ENCODE measurements at regions of chr18 and their contacts with region 1.

Region 1: GRCh38 chr18:13137670-13138419 is 80.7 kb upstream of the LDLRAD4 start:
- DNase-seq: peak; percentile 99
- ATAC-seq: peak; percentile 91
- H3K4me3 ChIP-seq: peak overlapping the region; percentile 81 to 98 (median 88)
- H3K27ac ChIP-seq: peak overlapping the region; percentile 99
- H3K4me1 ChIP-seq: peaks cover 37% of the 10 kb centered on the region
- H3K27me3 ChIP-seq: no peaks in the 10 kb centered on the region; a peak in 1 of 5 replicates
- CTCF ChIP-seq: peak; percentile 4; the same call in 1 of the 2 replicates
- EP300 ChIP-seq: peak; percentile 30 to 36; a peak in 1 of 4 replicates
- POLR2A ChIP-seq: peak in 1 of 2 experiments; percentile 83; a peak in 2 of 4 replicates
- RAD21 ChIP-seq: no peak

Region 2: DNA sequence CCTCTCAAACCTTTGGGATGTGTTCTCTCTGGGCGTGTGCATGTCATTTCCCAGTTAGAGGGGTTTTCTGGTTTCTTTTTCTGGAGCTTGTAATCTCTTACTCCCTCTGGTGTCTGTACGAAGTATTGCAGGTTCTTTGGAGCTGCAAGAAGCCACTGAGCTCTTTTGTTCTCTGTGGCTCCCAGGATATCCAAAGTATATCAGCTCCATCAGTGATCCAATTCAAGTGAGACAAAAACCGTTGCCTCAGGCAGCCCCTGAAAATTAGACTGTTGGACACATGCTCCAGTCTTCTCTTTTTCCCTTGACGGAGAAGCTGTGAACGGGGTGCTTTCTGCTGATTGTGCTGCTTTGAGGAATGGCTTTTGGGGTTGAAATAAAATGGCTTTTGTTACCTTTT is 21.7 kb after region 1 on chr18:
- CTCF ChIA-PET with region 1: interaction called, 20 read pairs
- POLR2A ChIA-PET with region 1: interaction called, 10 read pairs
- in situ Hi-C with region 1: no loop called
- intact Hi-C with region 1: loop called (anchors 1 kb)
- DNase-seq: peak; percentile 76
- ATAC-seq: peak; percentile 76
- H3K4me3 ChIP-seq: no peak overlapping the region
- H3K27ac ChIP-seq: no peak overlapping the region
- H3K4me1 ChIP-seq: peaks cover 30% of the 10 kb centered on the region
- H3K27me3 ChIP-seq: no peaks in the 10 kb centered on the region; a peak in 1 of 5 replicates
- CTCF ChIP-seq: peak; percentile 79
- EP300 ChIP-seq: no peak
- POLR2A ChIP-seq: no peak
- RAD21 ChIP-seq: peak; percentile 82

Region 3: GRCh38 chr18:13216092-13216582 is 78.3 kb after region 1 on chr18:
- CTCF ChIA-PET with region 1: no interaction called
- POLR2A ChIA-PET with region 1: interaction called, 7 read pairs
- in situ Hi-C with region 1: no loop called
- intact Hi-C with region 1: loop called (anchors 1 kb)
- DNase-seq: peak; percentile 66
- ATAC-seq: peak; percentile 78
- H3K4me3 ChIP-seq: peak overlapping the region in 2 of 3 experiments; percentile 64 to 83; a peak in 3 of 6 replicates
- H3K27ac ChIP-seq: no peak overlapping the region
- H3K4me1 ChIP-seq: peaks cover 59% of the 10 kb centered on the region
- H3K27me3 ChIP-seq: peaks cover 1 to 9% of the 10 kb centered on the region in 2 experiments; a peak in 3 of 5 replicates
- CTCF ChIP-seq: peak; percentile 91
- EP300 ChIP-seq: no peak
- POLR2A ChIP-seq: no peak
- RAD21 ChIP-seq: peak; percentile 78

Region 4: GRCh38 chr18:13541621-13542519 is 404.0 kb after region 1 on chr18:
- CTCF ChIA-PET with region 1: no interaction called
- POLR2A ChIA-PET with region 1: interaction called, 6 read pairs
- in situ Hi-C with region 1: no loop called
- intact Hi-C with region 1: loop called (anchors 5 kb)
- DNase-seq: peak; percentile 98
- ATAC-seq: peak; percentile 94
- H3K4me3 ChIP-seq: peak overlapping the region; percentile 43 to 73 (median 54)
- H3K27ac ChIP-seq: peak overlapping the region; percentile 86
- H3K4me1 ChIP-seq: peaks cover 88% of the 10 kb centered on the region
- H3K27me3 ChIP-seq: no peaks in the 10 kb centered on the region
- CTCF ChIP-seq: peak; percentile 26; the same call in 1 of the 2 replicates
- EP300 ChIP-seq: peak; percentile 88 to 97; a peak in 3 of 4 replicates
- POLR2A ChIP-seq: peak; percentile 46 to 51
- RAD21 ChIP-seq: no peak